Activated T-helper 2 cell treated with anti-CD3 and anti-CD28 coated beads, Interferon-gamma antibody, Interleukin-2, Interleukin-4, amounts not matched to agents 10 μg/mL and 5 μg/mL and 100 μg/mL, durations not matched to agents 14 hours and 24 hours and 36 hours (primary cell): ENCODE measurements at regions of chr5 and their contacts with region 1.

Region 1: GRCh38 chr5:172133359-172134029 is 54.5 kb downstream of the STK10 start:
- DNase-seq: no peak
- H3K4me3 Mint-ChIP-seq: peak overlapping the region; percentile 58
- H3K27ac Mint-ChIP-seq: peak overlapping the region; percentile 96
- H3K4me1 Mint-ChIP-seq: peaks cover 34% of the 10 kb centered on the region
- H3K27me3 Mint-ChIP-seq: no peaks in the 10 kb centered on the region

Region 2: DNA sequence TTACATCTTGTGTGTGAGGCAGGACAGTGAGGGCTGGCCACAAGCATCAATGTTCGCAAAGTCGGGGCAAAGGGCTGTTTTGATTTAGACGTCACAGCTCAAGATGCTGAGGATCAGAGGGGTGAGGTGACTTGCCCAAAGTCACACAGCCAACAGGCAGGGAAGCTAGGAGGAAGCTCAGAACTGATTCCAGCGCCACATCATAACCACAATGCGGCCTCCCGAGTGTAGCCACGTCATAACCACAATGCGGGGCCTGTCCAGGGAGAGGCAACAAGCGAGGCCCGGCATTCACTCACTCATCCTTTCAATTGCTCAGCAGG is 40.3 kb after region 1 on chr5:
- intact Hi-C with region 1: loop called (anchors 1 kb)
- DNase-seq: peak; percentile 70
- H3K4me3 Mint-ChIP-seq: peak overlapping the region; percentile 84
- H3K27ac Mint-ChIP-seq: peak overlapping the region; percentile 79
- H3K4me1 Mint-ChIP-seq: peaks cover 82% of the 10 kb centered on the region
- H3K27me3 Mint-ChIP-seq: no peaks in the 10 kb centered on the region